PC-9 (cell line): ENCODE measurements at regions of chr10 and their contacts with region 1.

Region 1: GRCh38 chr10:102432162-102432950 is at the start of gene CUEDC2:
- DNase-seq: peak; percentile 82 to 94
- H3K4me3 ChIP-seq: peak within 1 kb of the TSS; percentile 86
- H3K27ac ChIP-seq: no peak within 1 kb of the TSS
- H3K4me1 ChIP-seq: no peaks in the 10 kb centered on the region
- H3K27me3 ChIP-seq: no peaks in the 10 kb centered on the region
- CTCF ChIP-seq: no peak
- total RNA-seq, gene CUEDC2: 46.2 and 57.7 TPM in 2 replicates

Region 2: GRCh38 chr10:102870221-102870620 is 437.9 kb after region 1 on chr10:
- CTCF ChIA-PET with region 1: no interaction called
- POLR2A ChIA-PET with region 1: interaction called, 16 read pairs
- intact Hi-C with region 1: no loop called
- DNase-seq: no peak
- H3K4me3 ChIP-seq: no peak overlapping the region
- H3K27ac ChIP-seq: no peak overlapping the region
- H3K4me1 ChIP-seq: no peaks in the 10 kb centered on the region
- H3K27me3 ChIP-seq: no peaks in the 10 kb centered on the region
- CTCF ChIP-seq: no peak